K562 (cell line): ENCODE measurements at regions of chr11 and their contacts with region 1.

Region 1: DNA sequence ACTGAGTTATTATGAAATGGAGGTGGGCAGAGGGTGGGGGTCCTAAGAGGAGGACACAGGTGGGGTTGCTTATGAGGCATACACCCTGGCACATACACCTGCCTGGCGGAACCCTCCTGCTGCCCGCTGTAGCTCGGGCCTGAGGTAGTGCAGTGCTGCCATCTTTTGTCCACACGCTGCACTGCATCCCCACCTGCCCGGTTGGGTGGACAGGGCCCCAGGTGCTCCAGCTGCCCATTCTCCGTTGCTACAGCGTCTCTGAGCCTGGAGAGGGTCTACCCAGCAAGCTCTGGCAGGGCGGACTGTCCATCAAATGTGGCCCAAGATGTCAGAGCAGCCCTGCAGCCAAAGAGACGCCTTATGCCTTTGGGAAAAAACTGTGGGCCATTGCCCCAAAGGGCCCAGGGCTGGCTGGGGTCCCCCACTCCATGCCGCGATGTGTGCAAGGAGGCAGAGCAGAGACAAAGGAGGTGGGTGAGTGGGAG is 131.2 kb downstream of the BUD13 start:
- DNase-seq: peak; percentile 38 to 72 (median 44)
- ATAC-seq: peak; percentile 95
- H3K4me3 ChIP-seq: no peak overlapping the region
- H3K27ac ChIP-seq: no peak overlapping the region
- H3K4me1 ChIP-seq: no peaks in the 10 kb centered on the region
- H3K27me3 ChIP-seq: peaks cover 0 to 9% of the 10 kb centered on the region in 2 experiments; a peak in 2 of 5 replicates
- CTCF ChIP-seq: peak; percentile 76 to 87 (median 77)
- EP300 ChIP-seq: no peak
- POLR2A ChIP-seq: no peak
- RAD21 ChIP-seq: peak; percentile 43 to 77

Region 2: GRCh38 chr11:116012055-116012454 is 629.5 kb before region 1 on chr11:
- CTCF ChIA-PET with region 1: no interaction called
- POLR2A ChIA-PET with region 1: no interaction called
- in situ Hi-C with region 1: no loop called
- intact Hi-C with region 1: no loop called
- DNase-seq: no peak
- ATAC-seq: no peak
- H3K4me3 ChIP-seq: no peak overlapping the region
- H3K27ac ChIP-seq: no peak overlapping the region
- H3K4me1 ChIP-seq: no peaks in the 10 kb centered on the region
- H3K27me3 ChIP-seq: no peaks in the 10 kb centered on the region
- CTCF ChIP-seq: no peak
- EP300 ChIP-seq: no peak
- POLR2A ChIP-seq: no peak
- RAD21 ChIP-seq: no peak

Region 3: GRCh38 chr11:116357784-116358544 is 283.6 kb before region 1 on chr11:
- CTCF ChIA-PET with region 1: no interaction called
- POLR2A ChIA-PET with region 1: no interaction called
- in situ Hi-C with region 1: no loop called
- intact Hi-C with region 1: loop called (anchors 10 kb)
- DNase-seq: peak; percentile 68 to 87 (median 80)
- ATAC-seq: peak; percentile 100
- H3K4me3 ChIP-seq: no peak overlapping the region
- H3K27ac ChIP-seq: no peak overlapping the region
- H3K4me1 ChIP-seq: peaks cover 0 to 6% of the 10 kb centered on the region in 2 experiments; a peak in 1 of 5 replicates
- H3K27me3 ChIP-seq: peaks cover 0 to 46% of the 10 kb centered on the region in 2 experiments; a peak in 4 of 5 replicates
- CTCF ChIP-seq: peak; percentile 84 to 95 (median 92)
- EP300 ChIP-seq: no peak
- POLR2A ChIP-seq: no peak
- RAD21 ChIP-seq: peak; percentile 54 to 67; a peak in 3 of 4 replicates

Region 4: GRCh38 chr11:116454020-116454645 is 187.5 kb before region 1 on chr11:
- CTCF ChIA-PET with region 1: no interaction called
- POLR2A ChIA-PET with region 1: no interaction called
- in situ Hi-C with region 1: no loop called
- intact Hi-C with region 1: loop called (anchors 5 kb)
- DNase-seq: peak; percentile 14 to 55 (median 23)
- ATAC-seq: peak; percentile 80
- H3K4me3 ChIP-seq: no peak overlapping the region
- H3K27ac ChIP-seq: no peak overlapping the region
- H3K4me1 ChIP-seq: no peaks in the 10 kb centered on the region
- H3K27me3 ChIP-seq: peaks cover 7 to 11% of the 10 kb centered on the region in 2 experiments; a peak in 3 of 5 replicates
- CTCF ChIP-seq: peak; percentile 58 to 72 (median 63)
- EP300 ChIP-seq: no peak
- POLR2A ChIP-seq: no peak
- RAD21 ChIP-seq: peak in 1 of 2 experiments; percentile 56; a peak in 2 of 4 replicates

Region 5: GRCh38 chr11:116513894-116514293 is 127.7 kb before region 1 on chr11:
- CTCF ChIA-PET with region 1: interaction called, 4 read pairs
- POLR2A ChIA-PET with region 1: no interaction called
- in situ Hi-C with region 1: no loop called
- intact Hi-C with region 1: loop called (anchors 1 kb)
- DNase-seq: peak; percentile 53 to 66 (median 64)
- ATAC-seq: peak; percentile 91
- H3K4me3 ChIP-seq: no peak overlapping the region
- H3K27ac ChIP-seq: no peak overlapping the region
- H3K4me1 ChIP-seq: no peaks in the 10 kb centered on the region
- H3K27me3 ChIP-seq: peaks cover 0 to 9% of the 10 kb centered on the region in 2 experiments; a peak in 3 of 5 replicates
- CTCF ChIP-seq: peak; percentile 59 to 73 (median 66)
- EP300 ChIP-seq: no peak
- POLR2A ChIP-seq: no peak
- RAD21 ChIP-seq: peak in 1 of 2 experiments; percentile 48; a peak in 3 of 4 replicates

Region 6: GRCh38 chr11:116540645-116541304 is 100.8 kb before region 1 on chr11:
- CTCF ChIA-PET with region 1: no interaction called
- POLR2A ChIA-PET with region 1: no interaction called
- in situ Hi-C with region 1: no loop called
- intact Hi-C with region 1: no loop called
- DNase-seq: no peak
- ATAC-seq: no peak
- H3K4me3 ChIP-seq: no peak overlapping the region
- H3K27ac ChIP-seq: no peak overlapping the region
- H3K4me1 ChIP-seq: no peaks in the 10 kb centered on the region; a peak in 1 of 5 replicates
- H3K27me3 ChIP-seq: peaks cover 0 to 26% of the 10 kb centered on the region in 2 experiments; a peak in 3 of 5 replicates
- CTCF ChIP-seq: no peak
- EP300 ChIP-seq: no peak
- POLR2A ChIP-seq: no peak
- RAD21 ChIP-seq: no peak

Region 7: GRCh38 chr11:116680349-116681125 is 38.9 kb after region 1 on chr11:
- CTCF ChIA-PET with region 1: no interaction called
- POLR2A ChIA-PET with region 1: no interaction called
- in situ Hi-C with region 1: no loop called
- intact Hi-C with region 1: no loop called
- DNase-seq: no peak
- ATAC-seq: no peak
- H3K4me3 ChIP-seq: no peak overlapping the region
- H3K27ac ChIP-seq: no peak overlapping the region
- H3K4me1 ChIP-seq: no peaks in the 10 kb centered on the region
- H3K27me3 ChIP-seq: no peaks in the 10 kb centered on the region
- CTCF ChIP-seq: no peak
- EP300 ChIP-seq: no peak
- POLR2A ChIP-seq: no peak
- RAD21 ChIP-seq: no peak

Region 8: GRCh38 chr11:116861539-116861938 is 219.9 kb after region 1 on chr11:
- CTCF ChIA-PET with region 1: no interaction called
- POLR2A ChIA-PET with region 1: no interaction called
- in situ Hi-C with region 1: no loop called
- intact Hi-C with region 1: no loop called
- DNase-seq: peak in 2 of 4 experiments; percentile 19 to 47
- ATAC-seq: no peak
- H3K4me3 ChIP-seq: no peak overlapping the region
- H3K27ac ChIP-seq: no peak overlapping the region
- H3K4me1 ChIP-seq: peaks cover 5 to 12% of the 10 kb centered on the region in 2 experiments; a peak in 4 of 5 replicates
- H3K27me3 ChIP-seq: no peaks in the 10 kb centered on the region
- CTCF ChIP-seq: no peak
- EP300 ChIP-seq: no peak
- POLR2A ChIP-seq: no peak
- RAD21 ChIP-seq: no peak